ENCODE measurements at regions of chr6 and their contacts with region 1.

Region 1: GRCh38 chr6:1424306-1424928 is 35.0 kb downstream of the FOXF2 start:
- DNase-seq: peak; percentile 43
- H3K4me3 Mint-ChIP-seq: no peak overlapping the region
- H3K27ac Mint-ChIP-seq: no peak overlapping the region
- H3K4me1 Mint-ChIP-seq: peaks cover 2% of the 10 kb centered on the region
- H3K27me3 Mint-ChIP-seq: peaks cover 41% of the 10 kb centered on the region

Region 2: DNA sequence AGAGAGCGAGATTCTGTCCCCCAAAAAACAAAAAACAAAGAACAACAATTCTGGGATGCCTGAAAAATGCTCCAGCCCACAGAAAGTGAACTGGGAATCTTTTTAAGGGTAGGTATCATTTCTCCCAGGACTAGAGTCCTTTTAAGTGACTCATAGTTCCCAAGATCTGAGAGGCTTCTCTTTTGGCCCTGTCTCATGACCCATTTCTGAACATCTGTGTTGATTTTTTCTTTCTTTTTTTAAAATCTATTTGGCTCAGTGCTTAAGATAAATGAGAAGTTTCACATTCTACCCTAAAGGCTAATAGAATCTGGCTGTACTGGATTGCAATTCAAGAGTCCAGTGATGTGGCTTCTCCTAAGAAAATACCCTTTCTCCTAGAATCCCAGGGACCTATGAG is 330.1 kb before region 1 on chr6:
- CTCF ChIA-PET with region 1: no interaction called
- intact Hi-C with region 1: no loop called
- DNase-seq: no peak
- H3K4me3 Mint-ChIP-seq: no peak overlapping the region
- H3K27ac Mint-ChIP-seq: no peak overlapping the region
- H3K4me1 Mint-ChIP-seq: no peaks in the 10 kb centered on the region
- H3K27me3 Mint-ChIP-seq: peaks cover 10% of the 10 kb centered on the region

Region 3: DNA sequence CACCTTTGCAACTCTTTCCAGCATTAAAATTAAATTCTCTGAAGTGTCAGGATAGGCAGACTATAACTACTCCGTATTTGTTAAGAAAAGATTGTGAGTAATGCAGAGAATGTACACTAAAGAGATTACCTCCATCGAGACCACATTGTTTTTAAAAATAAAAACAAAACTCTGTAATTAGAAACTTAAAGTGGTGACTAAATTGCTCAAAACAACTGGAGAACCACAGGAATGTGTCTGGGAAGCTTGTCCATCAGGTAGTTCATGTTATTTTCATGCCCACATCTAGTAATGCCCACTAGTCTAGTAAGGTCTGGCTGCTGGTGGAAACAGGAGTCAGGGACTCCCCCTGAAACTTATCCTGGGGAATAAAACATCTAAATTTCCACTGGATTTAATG is 215.5 kb before region 1 on chr6:
- CTCF ChIA-PET with region 1: no interaction called
- intact Hi-C with region 1: no loop called
- DNase-seq: no peak
- H3K4me3 Mint-ChIP-seq: no peak overlapping the region
- H3K27ac Mint-ChIP-seq: no peak overlapping the region
- H3K4me1 Mint-ChIP-seq: no peaks in the 10 kb centered on the region
- H3K27me3 Mint-ChIP-seq: peaks cover 16% of the 10 kb centered on the region

Region 4: DNA sequence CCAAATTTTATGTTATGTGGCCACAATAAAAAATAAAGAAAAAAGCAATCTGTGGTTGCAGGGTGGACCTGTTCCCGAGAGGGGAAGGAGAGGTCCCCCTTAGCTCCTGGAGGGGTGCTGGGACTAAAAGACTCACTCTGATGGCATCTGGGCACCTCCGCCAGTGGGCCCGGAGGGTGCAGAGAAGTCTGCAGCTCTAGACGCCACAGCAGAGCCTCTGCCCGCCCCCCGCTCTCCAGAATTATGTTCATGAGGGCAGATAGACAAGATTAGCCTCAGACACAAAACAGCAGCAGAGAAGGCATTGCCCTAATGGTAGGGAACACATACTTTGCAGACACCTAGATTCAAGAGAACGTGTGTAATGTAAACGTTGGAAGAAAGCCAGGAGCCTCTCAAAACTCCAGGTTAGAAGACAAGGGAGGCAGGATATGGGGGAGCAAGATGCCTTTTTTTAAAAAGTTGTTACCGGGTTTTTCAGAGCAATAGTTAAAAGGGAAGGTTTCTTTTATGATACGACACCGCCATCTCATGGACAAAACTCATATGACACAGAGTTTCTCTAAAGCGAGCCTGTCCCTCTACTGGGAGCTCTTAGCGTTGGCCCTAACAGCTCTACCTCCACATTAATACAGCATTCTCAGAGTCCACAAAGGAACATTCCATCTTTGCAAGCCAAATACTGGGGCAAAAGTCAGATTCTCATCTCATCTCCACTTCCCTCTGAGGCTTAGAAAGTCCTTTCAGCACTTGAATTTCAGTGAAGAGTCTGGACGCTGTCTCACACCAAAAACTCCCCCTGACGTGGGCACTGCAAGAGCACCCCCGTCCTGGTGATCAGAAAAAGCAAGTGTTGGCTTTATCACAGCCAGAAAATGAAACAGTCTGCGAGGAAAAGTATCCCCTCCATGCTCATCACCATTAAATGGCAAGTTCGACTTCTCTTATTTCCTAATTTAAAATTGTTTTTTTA is 12.2 kb after region 1 on chr6:
- CTCF ChIA-PET with region 1: interaction called, 11 read pairs
- intact Hi-C with region 1: no loop called
- DNase-seq: peak; percentile 63
- H3K4me3 Mint-ChIP-seq: no peak overlapping the region
- H3K27ac Mint-ChIP-seq: no peak overlapping the region
- H3K4me1 Mint-ChIP-seq: no peaks in the 10 kb centered on the region
- H3K27me3 Mint-ChIP-seq: peaks cover 42% of the 10 kb centered on the region

Measured in activated naive CD4-positive, alpha-beta T cell treated with anti-CD3 and anti-CD28 coated beads for 36 hours (primary cell).